ENCODE measurements at regions of chr3 and their contacts with region 1.

Region 1: DNA sequence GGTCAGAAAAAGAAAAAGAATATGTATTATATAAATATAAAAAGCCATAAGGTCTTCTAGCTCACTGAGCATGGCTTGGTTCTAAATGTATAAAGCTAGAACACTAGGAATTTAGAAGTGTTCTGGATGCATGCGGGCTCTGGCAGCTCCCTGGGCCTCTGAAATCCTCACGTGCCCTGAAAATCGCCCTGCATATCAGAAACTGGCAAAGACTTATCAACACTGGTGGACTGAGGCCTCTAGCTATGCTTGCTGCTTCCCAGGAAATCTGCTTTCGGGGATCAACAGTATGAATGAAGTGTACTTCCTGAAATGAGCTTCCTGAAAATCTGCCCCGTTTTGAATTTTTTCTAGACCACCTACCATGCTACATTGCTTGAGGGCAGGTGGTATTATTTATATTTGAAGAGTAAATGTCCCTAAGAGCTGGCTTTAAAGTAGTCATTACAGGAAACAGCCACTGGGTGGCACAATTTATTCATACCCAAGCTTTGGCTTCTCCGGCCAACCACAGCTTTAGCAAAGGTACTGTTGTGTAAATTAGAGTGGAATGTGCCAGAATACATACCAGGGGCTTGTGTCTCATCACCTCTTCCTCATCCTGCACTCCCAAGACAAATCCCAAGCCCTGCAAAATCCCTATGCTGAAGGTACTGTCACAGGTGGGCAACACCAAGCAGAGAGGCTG is 17.7 kb downstream of the CRTAP start:
- DNase-seq: no peak
- ATAC-seq: peak; percentile 84
- H3K4me3 ChIP-seq: no peak overlapping the region
- H3K27ac ChIP-seq: peak overlapping the region in 1 of 2 donors; percentile 77
- H3K4me1 ChIP-seq: peaks cover 0 to 2% of the 10 kb centered on the region in 2 donors
- H3K27me3 ChIP-seq: no peaks in the 10 kb centered on the region

Region 2: GRCh38 chr3:33229066-33229465 is 97.6 kb after region 1 on chr3:
- intact Hi-C with region 1: loop called in 1 of 2 experiments (anchors 2 kb)
- DNase-seq: no peak
- ATAC-seq: no peak
- H3K4me3 ChIP-seq: no peak overlapping the region
- H3K27ac ChIP-seq: no peak overlapping the region
- H3K4me1 ChIP-seq: no peaks in the 10 kb centered on the region
- H3K27me3 ChIP-seq: no peaks in the 10 kb centered on the region